Posterior vena cava (tissue), 2 donors: ENCODE measurements at regions of chr1 and their contacts with region 1.

Region 1: DNA sequence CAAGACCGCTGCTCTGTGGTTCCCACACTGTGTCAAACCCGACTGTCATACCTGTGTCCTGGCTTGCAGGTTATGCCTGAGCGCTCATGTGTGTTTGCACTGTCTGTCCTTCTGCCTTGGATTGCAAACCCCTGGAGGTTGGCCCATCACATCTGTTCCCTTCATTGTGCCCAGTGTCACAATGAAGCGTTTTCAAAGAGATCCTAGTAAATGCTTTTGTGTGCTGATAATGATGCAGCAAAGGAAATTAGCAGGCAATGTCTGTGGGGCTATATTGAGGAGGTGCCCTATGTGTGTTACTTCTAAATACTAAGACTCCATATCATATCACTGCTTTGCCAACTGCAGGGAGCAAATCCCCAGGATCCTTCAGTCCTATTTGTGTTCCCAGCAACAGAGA is 424.4 kb upstream of the NFIA start:
- DNase-seq: no peak

Region 2: DNA sequence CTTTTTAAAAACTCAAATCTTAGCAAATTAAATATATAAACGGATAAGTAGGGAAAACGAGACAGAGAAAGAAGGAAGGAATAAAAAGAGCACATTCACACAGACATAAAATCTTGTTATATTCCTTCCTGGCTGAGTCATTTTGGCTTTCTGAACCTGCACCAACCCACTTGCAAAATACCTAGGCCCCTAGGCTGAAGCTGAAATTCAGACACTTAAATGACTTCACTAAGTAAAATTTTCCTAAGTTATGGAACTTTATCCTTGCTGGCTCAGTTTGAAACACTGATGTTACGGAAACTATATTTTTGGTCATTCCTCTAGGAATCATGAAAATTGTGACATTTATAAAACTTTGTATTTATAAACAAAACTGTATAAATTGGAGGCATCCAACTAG is 38.3 kb before region 1 on chr1:
- intact Hi-C with region 1: loop called in 1 of 2 experiments (anchors 2 kb)
- DNase-seq: no peak

Region 3: GRCh38 chr1:60797351-60797750 is 139.4 kb after region 1 on chr1:
- intact Hi-C with region 1: no loop called
- DNase-seq: no peak